A549 (cell line): ENCODE measurements at regions of chr19 and their contacts with region 1.

Region 1: DNA sequence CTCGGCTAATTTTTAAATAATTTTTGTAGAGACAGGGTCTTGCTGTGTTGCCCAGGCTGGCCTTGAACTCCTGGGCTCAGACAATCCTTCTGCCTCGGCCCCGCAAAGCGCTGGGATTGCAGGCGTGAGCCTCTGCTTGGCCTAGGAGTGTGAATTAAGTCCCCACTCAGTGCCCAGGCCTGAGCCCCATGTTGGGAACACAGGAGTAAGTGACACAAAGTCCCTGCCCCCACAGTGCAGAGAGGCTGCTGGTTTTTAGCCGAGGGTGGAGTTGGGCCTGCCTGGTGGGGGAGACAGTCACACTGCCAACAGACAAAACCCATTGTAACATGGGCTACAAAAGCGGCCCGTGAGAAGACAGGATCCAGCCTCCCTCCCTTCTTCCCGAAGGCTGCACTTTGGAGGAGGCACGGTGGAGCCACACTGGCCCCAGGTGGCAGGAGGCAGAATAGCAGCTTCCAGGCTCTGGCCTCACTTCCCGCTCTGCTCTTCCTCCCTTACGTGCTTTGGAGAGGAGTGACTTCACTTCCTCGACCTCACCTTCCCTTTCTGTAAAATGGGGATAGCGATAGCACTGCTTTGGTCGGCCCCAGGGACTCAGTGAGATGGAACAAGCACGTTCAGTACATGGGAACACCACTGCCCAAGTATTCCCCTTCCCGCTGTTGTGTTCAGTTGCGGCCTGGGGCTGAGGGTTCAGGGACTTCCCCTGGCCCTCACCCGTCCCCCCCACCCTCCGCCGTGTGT is 15.2 kb upstream of the EHD2 start:
- DNase-seq: peak; percentile 90 to 94
- ATAC-seq: peak; percentile 80 to 88
- H3K4me3 ChIP-seq: no peak overlapping the region
- H3K27ac ChIP-seq: peak overlapping the region; percentile 59 to 77; a peak in 5 of 6 replicates
- H3K4me1 ChIP-seq: peaks cover 4% of the 10 kb centered on the region
- CTCF ChIP-seq: peak; percentile 97
- EP300 ChIP-seq: no peak
- POLR2A ChIP-seq: no peak
- RAD21 ChIP-seq: peak; percentile 98 to 100

Region 2: DNA sequence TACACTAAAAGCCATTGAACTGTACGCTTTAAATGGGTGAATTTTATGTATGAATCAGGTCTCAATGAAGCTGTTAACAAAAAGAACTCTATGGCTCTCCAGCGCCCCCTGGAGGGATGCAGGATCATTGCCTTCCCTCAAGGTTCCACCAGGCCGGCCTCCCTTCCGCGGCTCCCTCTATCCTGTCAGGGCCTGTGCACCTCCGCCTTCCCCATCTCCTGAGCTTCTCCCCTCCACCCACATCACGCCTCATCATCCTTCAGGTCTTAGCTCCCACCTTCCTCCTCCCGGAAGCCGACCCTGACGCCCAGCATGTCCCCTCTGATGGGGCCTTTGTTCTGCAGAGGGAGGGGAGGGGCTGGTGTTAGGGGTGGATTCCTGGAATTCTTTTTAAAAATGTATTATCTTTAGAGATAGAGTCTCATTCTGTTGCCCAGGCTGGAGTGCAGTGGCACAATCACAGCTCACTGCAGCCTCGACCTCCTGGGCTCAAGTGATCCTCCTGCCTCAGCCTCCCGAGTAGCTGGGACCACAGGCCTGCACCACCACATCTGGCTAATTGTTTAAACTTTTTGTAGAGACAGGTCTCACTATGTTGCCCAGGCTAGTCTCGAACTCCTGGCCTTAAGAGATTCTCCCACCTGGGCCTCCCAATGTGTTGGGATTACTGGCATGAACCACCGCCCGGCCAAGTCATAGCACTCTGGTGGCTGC is 306.4 kb before region 1 on chr19:
- CTCF ChIA-PET with region 1: interaction called, 10 read pairs
- POLR2A ChIA-PET with region 1: no interaction called
- DNase-seq: peak; percentile 75 to 81
- ATAC-seq: peak; percentile 91 to 93
- H3K4me3 ChIP-seq: no peak overlapping the region
- H3K27ac ChIP-seq: peak overlapping the region in 1 of 2 experiments; percentile 42; a peak in 1 of 6 replicates
- H3K4me1 ChIP-seq: no peaks in the 10 kb centered on the region
- CTCF ChIP-seq: peak; percentile 98
- EP300 ChIP-seq: no peak
- POLR2A ChIP-seq: no peak
- RAD21 ChIP-seq: peak; percentile 89 to 91

Region 3: DNA sequence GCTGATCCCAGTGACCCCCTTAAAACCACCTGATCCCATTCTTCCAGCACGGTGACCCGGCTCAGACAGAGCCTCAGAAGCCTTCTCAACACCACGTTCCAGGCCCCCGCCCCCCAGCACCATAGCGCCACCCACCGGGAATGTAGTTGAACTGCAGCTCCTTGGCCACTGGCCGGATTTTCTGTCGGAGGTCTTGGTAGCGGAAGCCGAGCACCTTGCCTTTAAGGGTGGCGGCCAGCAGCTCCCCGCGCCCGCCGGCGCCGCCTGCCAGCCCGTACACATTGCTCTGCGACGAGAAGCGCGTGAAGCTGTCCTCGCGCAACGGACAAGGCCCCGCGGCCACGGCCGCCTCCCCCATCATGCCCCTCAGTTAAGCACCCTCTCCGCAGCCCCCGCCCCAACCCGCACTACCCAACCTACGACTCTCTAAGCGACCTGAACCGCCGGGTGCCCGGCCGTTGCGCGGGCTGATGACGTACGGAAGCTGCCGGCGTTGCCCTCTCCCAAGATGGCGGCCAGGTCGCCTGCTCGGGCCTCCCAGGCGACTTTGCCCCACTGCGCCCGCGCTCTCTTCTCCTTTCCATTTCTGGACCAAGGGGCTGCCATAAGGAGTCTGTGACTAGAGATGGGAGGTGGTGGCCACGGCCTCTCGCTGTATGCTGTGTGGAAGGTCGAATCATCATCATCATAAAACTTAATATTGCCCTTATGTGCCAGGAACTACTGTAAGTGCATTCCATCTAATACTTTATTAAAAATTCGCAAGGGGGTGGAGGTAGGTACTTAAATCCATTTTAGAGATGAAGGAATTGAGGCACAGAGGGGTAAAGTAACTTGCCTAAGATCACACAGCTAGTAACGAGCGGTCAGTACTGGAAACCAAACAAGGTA is 214.0 kb before region 1 on chr19 and contains the start of gene KPTN:
- CTCF ChIA-PET with region 1: interaction called, 11 read pairs
- POLR2A ChIA-PET with region 1: interaction called, 4 read pairs
- DNase-seq: peak; percentile 96 to 99
- ATAC-seq: peak; percentile 84 to 90
- H3K4me3 ChIP-seq: peak within 1 kb of the TSS; percentile 53
- H3K27ac ChIP-seq: peak within 1 kb of the TSS; percentile 96 to 97
- H3K4me1 ChIP-seq: peaks cover 12% of the 10 kb centered on the region; the same call in 2 of the 3 replicates
- CTCF ChIP-seq: peak; percentile 98
- EP300 ChIP-seq: no peak
- POLR2A ChIP-seq: peak; percentile 88
- RAD21 ChIP-seq: peak; percentile 70 to 75
- polyA plus RNA-seq, gene KPTN: 10.6 and 12.5 TPM in 2 replicates

Region 4: GRCh38 chr19:47600246-47601179 is 97.5 kb before region 1 on chr19:
- CTCF ChIA-PET with region 1: interaction called, 27 read pairs
- POLR2A ChIA-PET with region 1: interaction called, 4 read pairs
- DNase-seq: peak; percentile 99 to 100
- ATAC-seq: peak; percentile 90 to 93
- H3K4me3 ChIP-seq: peak overlapping the region; percentile 64
- H3K27ac ChIP-seq: peak overlapping the region; percentile 82 to 89
- H3K4me1 ChIP-seq: peaks cover 19% of the 10 kb centered on the region
- CTCF ChIP-seq: no peak
- EP300 ChIP-seq: no peak
- POLR2A ChIP-seq: peak; percentile 93
- RAD21 ChIP-seq: peak in 1 of 2 experiments; percentile 22; a peak in 3 of 5 replicates

Region 5: DNA sequence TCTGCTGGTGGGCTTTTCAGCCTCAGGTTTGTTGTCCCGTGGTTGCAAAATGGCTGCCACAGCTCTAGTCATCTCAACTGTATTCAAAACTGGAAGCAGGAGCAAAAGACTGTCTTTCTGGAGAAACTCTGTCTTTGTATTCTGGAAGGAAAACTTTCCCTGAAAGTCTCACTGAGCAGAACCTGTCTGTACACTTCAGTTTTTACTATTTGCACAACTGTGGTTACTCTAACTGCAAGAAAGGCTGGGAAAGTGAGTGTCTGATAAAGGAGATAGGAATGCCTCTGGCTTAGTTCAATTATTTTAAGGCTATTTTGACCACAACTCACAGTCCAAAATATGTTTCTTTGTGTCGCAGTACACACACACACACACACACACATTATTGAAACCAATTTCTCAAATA is 34.6 kb before region 1 on chr19:
- CTCF ChIA-PET with region 1: interaction called, 16 read pairs
- POLR2A ChIA-PET with region 1: no interaction called
- DNase-seq: peak in 1 of 2 experiments; percentile 31
- ATAC-seq: peak in 1 of 2 experiments; percentile 53; a peak in 3 of 6 replicates
- H3K4me3 ChIP-seq: no peak overlapping the region
- H3K27ac ChIP-seq: peak overlapping the region; percentile 79 to 80; a peak in 5 of 6 replicates
- H3K4me1 ChIP-seq: peaks cover 70% of the 10 kb centered on the region
- CTCF ChIP-seq: no peak
- EP300 ChIP-seq: no peak
- POLR2A ChIP-seq: no peak
- RAD21 ChIP-seq: no peak

Region 6: GRCh38 chr19:47765523-47766358 is 67.7 kb after region 1 on chr19:
- CTCF ChIA-PET with region 1: interaction called, 1,389 read pairs
- POLR2A ChIA-PET with region 1: no interaction called
- DNase-seq: peak; percentile 58 to 74
- ATAC-seq: peak; percentile 66 to 85
- H3K4me3 ChIP-seq: no peak overlapping the region
- H3K27ac ChIP-seq: no peak overlapping the region
- H3K4me1 ChIP-seq: no peaks in the 10 kb centered on the region
- CTCF ChIP-seq: peak; percentile 83
- EP300 ChIP-seq: no peak
- POLR2A ChIP-seq: no peak
- RAD21 ChIP-seq: peak; percentile 61 to 84